Activated B cell treated with CpG ODN at 0.5 μM for 24 hours (primary cell): ENCODE measurements at regions of chr1 and their contacts with region 1.

Region 1: GRCh38 chr1:100351095-100351891 is 1.0 kb upstream of the CDC14A start:
- DNase-seq: peak; percentile 78
- ATAC-seq: peak; percentile 66
- H3K4me3 Mint-ChIP-seq: peak overlapping the region; percentile 99
- H3K27ac Mint-ChIP-seq: peak overlapping the region; percentile 96
- H3K4me1 Mint-ChIP-seq: peaks cover 35% of the 10 kb centered on the region
- H3K27me3 Mint-ChIP-seq: no peaks in the 10 kb centered on the region
- CTCF ChIP-seq: no peak

Region 2: DNA sequence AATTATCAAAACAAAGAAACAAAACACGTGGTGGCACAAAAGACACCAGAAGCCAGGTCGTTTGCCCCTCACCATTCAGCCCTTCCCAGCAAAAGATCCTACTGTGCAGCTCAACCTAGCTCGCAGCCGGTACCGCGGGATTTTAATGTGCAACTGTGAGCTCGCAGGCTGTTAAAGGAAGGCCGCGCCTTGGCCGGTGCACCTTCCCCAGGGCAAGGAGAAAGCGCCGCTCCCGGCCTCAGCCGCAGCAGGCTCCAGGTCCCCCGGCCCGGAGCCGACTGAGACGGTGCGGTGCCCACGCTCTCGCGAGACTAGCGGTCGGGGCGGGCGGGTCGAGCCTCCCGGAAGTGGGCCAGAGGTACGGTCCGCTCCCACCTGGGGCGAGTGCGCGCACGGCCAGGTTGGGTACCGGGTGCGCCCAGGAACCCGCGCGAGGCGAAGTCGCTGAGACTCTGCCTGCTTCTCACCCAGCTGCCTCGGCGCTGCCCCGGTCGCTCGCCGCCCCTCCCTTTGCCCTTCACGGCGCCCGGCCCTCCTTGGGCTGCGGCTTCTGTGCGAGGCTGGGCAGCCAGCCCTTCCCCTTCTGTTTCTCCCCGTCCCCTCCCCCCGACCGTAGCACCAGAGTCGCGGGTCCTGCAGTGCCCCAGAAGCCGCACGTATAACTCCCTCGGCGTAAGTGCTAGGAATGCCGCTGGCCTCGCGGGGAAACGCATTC is 501.4 kb before region 1 on chr1 and contains the start of gene AGL:
- CTCF ChIA-PET with region 1: no interaction called
- POLR2A ChIA-PET with region 1: no interaction called
- intact Hi-C with region 1: loop called (anchors 1 kb)
- DNase-seq: peak; percentile 82
- ATAC-seq: peak; percentile 95
- H3K4me3 Mint-ChIP-seq: peak within 1 kb of the TSS; percentile 97
- H3K27ac Mint-ChIP-seq: peak within 1 kb of the TSS; percentile 89
- H3K4me1 Mint-ChIP-seq: peaks cover 26% of the 10 kb centered on the region
- H3K27me3 Mint-ChIP-seq: no peaks in the 10 kb centered on the region
- CTCF ChIP-seq: no peak
- total RNA-seq, gene AGL: 19.6 and 21.8 TPM in 2 replicates

Region 3: DNA sequence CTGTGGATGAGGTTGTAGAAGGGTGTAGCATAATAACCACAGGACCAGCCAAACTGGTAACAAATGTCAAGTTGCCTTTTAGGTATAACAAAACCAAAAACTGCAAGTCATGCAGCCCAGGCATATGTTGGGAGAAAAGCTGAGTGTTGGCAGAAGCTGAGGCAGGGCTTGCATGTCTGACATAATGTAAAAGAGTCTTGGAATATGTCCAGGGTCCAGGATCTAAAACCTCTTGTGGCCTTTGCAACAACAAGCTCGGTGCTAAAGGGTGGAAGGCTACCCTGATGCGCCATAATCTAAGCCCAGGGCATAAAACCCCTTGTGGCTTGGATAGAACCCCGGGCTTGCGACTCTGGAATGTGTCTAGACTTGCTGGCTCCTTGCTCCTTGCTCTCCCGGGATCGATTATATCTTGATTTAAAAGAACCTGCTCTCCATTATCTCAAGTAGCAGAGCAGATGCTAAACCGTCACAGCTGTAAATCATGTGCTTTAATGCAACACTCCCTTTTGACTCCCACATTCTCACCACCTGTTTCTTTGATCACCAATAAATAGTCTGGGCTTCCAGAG is 408.0 kb before region 1 on chr1:
- CTCF ChIA-PET with region 1: no interaction called
- POLR2A ChIA-PET with region 1: no interaction called
- intact Hi-C with region 1: no loop called
- DNase-seq: no peak
- ATAC-seq: no peak
- H3K4me3 Mint-ChIP-seq: no peak overlapping the region
- H3K27ac Mint-ChIP-seq: no peak overlapping the region
- H3K4me1 Mint-ChIP-seq: no peaks in the 10 kb centered on the region
- H3K27me3 Mint-ChIP-seq: peaks cover 2% of the 10 kb centered on the region
- CTCF ChIP-seq: no peak

Region 4: GRCh38 chr1:100184536-100184935 is 166.8 kb before region 1 on chr1:
- CTCF ChIA-PET with region 1: no interaction called
- POLR2A ChIA-PET with region 1: interaction called, 3 read pairs
- intact Hi-C with region 1: loop called (anchors 2 kb)
- DNase-seq: no peak
- ATAC-seq: peak; percentile 99
- H3K4me3 Mint-ChIP-seq: no peak overlapping the region
- H3K27ac Mint-ChIP-seq: peak overlapping the region; percentile 75
- H3K4me1 Mint-ChIP-seq: peaks cover 15% of the 10 kb centered on the region
- H3K27me3 Mint-ChIP-seq: no peaks in the 10 kb centered on the region
- CTCF ChIP-seq: no peak

Region 5: DNA sequence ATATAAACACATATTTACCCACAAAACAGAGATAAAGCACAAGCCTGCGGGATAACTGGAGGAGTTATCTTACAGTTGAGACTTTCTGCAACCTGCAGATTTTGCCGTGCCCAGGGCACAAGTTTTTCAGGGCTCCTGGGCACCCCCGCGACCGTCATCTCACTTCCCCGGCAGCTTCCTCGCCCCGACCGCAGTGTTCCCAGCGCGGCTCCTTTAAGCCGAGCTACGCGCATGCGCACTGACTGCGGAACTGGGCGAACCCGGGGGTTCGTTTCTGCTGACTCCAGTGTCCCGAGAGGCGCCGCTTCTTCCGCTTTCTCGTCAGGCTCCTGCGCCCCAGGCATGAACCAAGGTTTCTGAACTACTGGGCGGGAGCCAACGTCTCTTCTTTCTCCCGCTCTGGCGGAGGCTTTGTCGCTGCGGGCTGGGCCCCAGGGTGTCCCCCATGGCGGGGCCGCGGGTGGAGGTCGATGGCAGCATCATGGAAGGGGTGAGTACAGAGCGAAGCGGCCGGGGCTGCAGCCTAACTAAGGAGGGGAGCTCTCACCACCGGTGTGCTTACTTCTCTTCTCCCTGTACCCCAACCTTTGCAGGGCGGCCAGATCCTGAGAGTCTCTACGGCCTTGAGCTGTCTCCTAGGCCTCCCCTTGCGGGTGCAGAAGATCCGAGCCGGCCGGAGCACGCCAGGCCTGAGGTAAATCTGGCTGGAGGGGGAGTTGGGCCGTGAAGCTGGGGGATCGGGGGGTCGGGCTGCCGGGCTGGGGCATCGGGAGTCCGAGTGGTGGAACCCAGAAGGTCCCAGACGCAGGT is 85.2 kb before region 1 on chr1 and contains the start of gene RTCA:
- CTCF ChIA-PET with region 1: interaction called, 5 read pairs
- POLR2A ChIA-PET with region 1: interaction called, 34 read pairs
- intact Hi-C with region 1: loop called (anchors 1 kb)
- DNase-seq: peak; percentile 91
- ATAC-seq: peak; percentile 95
- H3K4me3 Mint-ChIP-seq: peak within 1 kb of the TSS; percentile 100
- H3K27ac Mint-ChIP-seq: peak within 1 kb of the TSS; percentile 98
- H3K4me1 Mint-ChIP-seq: peaks cover 38% of the 10 kb centered on the region
- H3K27me3 Mint-ChIP-seq: no peaks in the 10 kb centered on the region
- CTCF ChIP-seq: no peak
- total RNA-seq, gene RTCA: 32.3 and 34.5 TPM in 2 replicates

Region 6: DNA sequence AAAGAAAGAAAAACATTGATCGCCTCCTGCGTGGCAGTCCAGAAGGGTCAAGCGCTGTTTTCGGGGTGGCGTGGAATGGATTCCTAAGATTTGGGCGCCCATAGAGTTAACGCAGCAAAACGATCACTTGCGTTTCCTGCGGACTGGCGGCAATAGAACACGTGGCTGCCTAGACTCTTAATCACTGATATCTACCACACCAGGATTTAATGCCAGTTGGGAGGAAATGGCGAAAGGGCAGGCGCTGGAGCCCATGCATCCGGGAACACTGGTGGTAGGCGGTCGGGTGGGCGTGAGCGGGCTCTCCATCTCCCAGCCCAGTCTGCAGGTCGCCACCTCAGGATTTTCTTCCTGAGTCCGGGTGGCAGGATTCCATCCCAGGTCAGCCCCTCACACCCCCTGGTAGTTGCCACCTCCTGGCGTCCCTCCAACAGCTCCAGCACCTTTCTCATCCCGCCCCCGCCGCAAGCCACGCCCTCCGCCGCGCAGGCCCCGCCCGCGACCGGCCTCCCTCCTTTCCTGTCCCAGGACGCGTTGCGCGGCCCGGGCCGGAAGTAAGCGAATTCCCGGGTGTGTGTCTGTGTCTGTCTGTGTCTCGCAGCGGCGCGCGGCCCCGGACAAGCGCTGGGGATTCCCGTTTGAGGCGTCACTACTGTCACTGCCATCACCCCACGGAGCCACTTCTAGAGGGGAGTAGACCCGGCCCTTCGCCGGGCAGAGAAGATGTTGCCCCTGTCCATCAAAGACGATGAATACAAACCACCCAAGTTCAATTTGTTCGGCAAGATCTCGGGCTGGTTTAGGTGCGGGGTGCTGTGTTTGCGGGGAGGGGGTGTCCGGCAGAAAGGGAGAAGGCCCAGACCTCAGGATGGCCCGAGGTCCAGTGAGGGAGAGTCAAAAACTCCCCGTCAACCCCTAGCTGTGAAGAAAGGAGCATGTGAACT is 544.5 kb after region 1 on chr1 and contains the start of gene SLC30A7:
- CTCF ChIA-PET with region 1: no interaction called
- POLR2A ChIA-PET with region 1: interaction called, 8 read pairs
- intact Hi-C with region 1: loop called (anchors 1 kb)
- DNase-seq: peak; percentile 97
- ATAC-seq: peak; percentile 86
- H3K4me3 Mint-ChIP-seq: peak within 1 kb of the TSS; percentile 98
- H3K27ac Mint-ChIP-seq: peak within 1 kb of the TSS; percentile 95
- H3K4me1 Mint-ChIP-seq: peaks cover 29% of the 10 kb centered on the region
- H3K27me3 Mint-ChIP-seq: no peaks in the 10 kb centered on the region
- CTCF ChIP-seq: no peak
- total RNA-seq, gene SLC30A7: 21.1 and 25.7 TPM in 2 replicates